Ascending aorta (tissue), 2 donors: ENCODE measurements at regions of chr19 and their contacts with region 1.

Region 1: DNA sequence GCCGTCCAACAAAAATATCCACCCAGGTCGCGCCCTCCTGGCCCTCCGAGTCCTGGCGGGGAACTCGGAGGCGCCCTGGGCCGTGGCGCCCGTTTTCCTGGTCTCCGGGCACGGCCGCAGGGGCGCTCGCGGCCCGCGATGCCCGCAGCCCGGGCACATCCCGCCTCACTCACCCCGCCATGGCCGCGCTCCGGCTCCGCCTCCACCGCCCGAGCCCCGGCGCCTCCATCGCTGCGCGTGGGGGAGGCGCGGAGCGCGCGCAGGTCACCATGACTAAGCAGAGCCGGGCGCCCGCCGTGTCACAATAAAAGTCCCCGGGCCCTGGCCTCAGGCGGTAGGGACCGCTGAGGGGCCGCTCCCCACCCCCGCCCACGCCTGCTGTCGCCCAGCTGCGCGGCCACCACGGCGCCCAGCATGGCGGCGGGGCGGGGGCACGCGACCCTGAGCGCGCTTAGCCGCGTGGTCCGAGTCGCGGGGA is 593 bp downstream of the KEAP1 start:
- DNase-seq: peak; percentile 73 to 97
- H3K4me3 ChIP-seq: peak overlapping the region; percentile 82 to 98
- H3K27ac ChIP-seq: peak overlapping the region; percentile 95 to 96
- H3K4me1 ChIP-seq: peaks cover 3 to 22% of the 10 kb centered on the region in 2 donors
- H3K27me3 ChIP-seq: no peaks in the 10 kb centered on the region
- CTCF ChIP-seq: no peak

Region 2: GRCh38 chr19:10478903-10479384 is 23.6 kb before region 1 on chr19:
- intact Hi-C with region 1: loop called (anchors 1 kb)
- DNase-seq: peak; percentile 85 to 97
- H3K4me3 ChIP-seq: peak overlapping the region; percentile 67 to 73
- H3K27ac ChIP-seq: peak overlapping the region; percentile 31 to 56
- H3K4me1 ChIP-seq: peaks cover 0 to 9% of the 10 kb centered on the region in 2 donors
- H3K27me3 ChIP-seq: no peaks in the 10 kb centered on the region
- CTCF ChIP-seq: peak; percentile 18 to 91 (median 85)

Region 3: DNA sequence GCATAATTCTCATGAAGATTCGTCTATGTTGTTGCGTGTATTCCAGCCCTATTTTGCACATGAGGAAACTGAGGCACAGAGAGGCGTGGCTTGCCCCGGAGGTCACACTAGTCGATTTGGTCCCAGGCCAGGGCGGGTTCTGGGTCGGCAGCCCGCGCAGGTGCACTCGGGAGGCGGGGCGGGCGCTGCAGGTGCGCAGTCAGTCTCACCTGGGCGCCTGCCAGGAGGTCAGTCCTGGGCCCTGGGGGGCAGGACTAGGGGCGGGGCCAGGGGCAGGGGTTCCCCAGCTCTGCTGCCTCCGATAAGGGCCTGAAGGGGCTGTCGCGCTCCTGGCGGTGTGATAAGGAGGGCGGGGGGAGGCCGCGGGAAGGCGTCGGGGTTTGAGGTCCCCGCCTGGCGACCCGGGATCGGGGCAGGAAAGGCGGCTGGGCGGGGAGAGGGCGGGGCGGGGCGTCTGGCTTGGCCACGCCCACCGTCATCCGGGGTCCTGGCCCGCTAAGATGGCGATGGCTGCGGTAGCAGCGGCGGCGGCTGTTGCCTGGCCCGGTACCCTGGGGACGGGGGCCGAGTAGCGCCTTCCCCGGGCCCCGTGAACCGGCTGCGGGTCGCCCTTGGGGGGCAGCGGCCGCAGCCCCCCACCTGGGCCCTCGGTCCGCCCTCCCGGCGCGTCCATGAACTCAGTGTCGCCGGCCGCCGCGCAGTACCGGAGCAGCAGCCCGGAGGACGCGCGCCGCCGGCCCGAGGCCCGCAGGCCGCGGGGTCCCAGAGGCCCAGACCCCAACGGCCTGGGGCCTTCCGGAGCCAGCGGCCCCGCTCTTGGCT is 41.1 kb after region 1 on chr19 and contains the start of gene ATG4D:
- intact Hi-C with region 1: loop called (anchors 2 kb)
- DNase-seq: peak in 1 of 2 donors; percentile 88
- H3K4me3 ChIP-seq: peak within 1 kb of the TSS; percentile 98 to 100
- H3K27ac ChIP-seq: peak within 1 kb of the TSS; percentile 89 to 90
- H3K4me1 ChIP-seq: peaks cover 10 to 14% of the 10 kb centered on the region in 2 donors
- H3K27me3 ChIP-seq: no peaks in the 10 kb centered on the region
- CTCF ChIP-seq: no peak
- total RNA-seq, gene ATG4D: 11.0 TPM

Region 4: GRCh38 chr19:10553943-10554381 is 51.4 kb after region 1 on chr19:
- intact Hi-C with region 1: no loop called
- DNase-seq: no peak
- H3K4me3 ChIP-seq: no peak overlapping the region
- H3K27ac ChIP-seq: no peak overlapping the region
- H3K4me1 ChIP-seq: no peaks in the 10 kb centered on the region
- H3K27me3 ChIP-seq: no peaks in the 10 kb centered on the region
- CTCF ChIP-seq: no peak

Region 5: DNA sequence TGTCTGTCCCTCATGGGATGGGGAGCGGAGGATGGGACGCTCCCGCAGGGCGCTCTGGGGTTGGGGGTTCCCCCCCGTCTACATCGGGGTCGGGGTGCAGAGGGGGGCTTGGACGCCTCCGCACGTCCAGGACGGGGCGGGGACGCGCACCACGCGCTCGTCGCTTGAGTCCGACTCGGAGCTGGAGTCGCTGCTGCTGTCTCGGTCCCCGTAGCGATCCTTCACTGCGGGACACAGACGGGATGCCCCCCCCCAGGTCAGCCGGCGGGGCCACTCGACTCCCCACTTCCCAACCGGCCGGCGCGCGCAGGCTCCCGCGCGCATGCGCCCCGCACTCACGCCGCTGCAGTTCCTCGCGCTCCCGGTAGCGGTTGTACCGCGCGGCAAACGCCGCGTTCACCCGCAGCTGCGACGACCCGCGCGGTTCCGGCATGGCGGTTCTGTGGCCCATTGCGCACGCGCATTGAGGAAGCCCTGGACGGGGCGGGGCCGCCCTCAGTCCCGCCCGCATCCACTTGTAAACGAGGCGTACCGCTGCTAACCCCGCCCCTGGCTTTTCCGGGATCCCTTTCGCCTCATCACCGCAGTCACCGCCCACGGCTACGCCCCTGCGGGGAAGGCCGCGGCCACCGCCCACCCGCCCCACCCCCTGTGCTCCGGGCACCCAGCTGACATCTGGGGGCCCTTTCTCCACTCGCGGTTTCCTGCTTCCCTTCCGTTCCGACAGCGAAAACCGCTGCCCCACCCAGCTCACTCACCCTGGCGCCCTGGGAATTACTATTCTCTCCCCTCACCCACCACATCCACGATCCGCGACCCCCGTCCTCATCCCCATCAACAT is 63.2 kb after region 1 on chr19 and contains the start of gene KRI1:
- intact Hi-C with region 1: loop called (anchors 1 kb)
- DNase-seq: peak; percentile 94 to 99
- H3K4me3 ChIP-seq: peak within 1 kb of the TSS; percentile 61 to 98
- H3K27ac ChIP-seq: peak within 1 kb of the TSS; percentile 78 to 93
- H3K4me1 ChIP-seq: peaks cover 12 to 26% of the 10 kb centered on the region in 2 donors
- H3K27me3 ChIP-seq: no peaks in the 10 kb centered on the region
- CTCF ChIP-seq: peak in 2 of 3 experiments; percentile 17 to 68
- total RNA-seq, gene KRI1: 21.9 TPM

Region 6: DNA sequence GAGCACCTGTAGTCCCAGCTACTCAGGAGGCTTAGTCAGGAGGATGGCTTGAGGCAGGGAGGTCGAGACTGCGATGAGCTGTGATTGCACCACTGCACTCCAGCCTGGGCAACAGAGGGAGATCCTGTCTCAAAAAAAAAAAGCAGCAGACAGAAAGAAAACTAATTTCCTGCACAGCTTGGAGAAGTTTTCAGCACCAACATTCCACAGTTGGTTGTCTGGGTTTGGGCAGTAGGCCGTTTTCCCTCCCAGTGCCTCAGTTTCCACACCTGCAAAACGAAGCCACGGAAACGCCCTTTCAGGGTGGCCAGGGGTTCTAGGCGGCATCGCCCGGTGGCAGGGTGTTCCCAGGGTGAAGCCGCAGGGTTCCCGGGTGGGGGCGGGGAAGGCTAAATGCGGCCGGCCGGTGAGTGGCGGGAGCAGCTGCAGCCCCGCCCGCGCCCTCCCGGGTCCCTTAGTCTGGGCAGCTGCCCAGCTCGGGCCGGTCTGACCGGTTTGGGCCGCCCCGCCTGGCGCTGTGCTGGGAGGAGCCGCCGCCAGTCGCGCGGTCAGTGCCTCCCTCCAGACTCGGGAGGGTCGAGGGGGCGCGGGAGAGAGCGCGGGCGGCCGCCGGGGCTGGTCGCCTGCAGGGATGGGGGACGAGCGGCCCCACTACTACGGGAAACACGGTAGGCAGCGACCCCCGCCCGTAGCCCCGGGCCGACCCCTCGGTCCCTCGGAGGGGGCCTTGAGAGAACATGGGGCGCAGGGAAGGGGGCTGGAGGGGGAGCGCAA is 122.6 kb after region 1 on chr19 and contains the start of gene SLC44A2:
- intact Hi-C with region 1: loop called (anchors 5 kb)
- DNase-seq: peak in 1 of 2 donors; percentile 83
- H3K4me3 ChIP-seq: peak within 1 kb of the TSS; percentile 67
- H3K27ac ChIP-seq: peak within 1 kb of the TSS; percentile 79 to 85
- H3K4me1 ChIP-seq: peaks cover 7 to 15% of the 10 kb centered on the region in 2 donors
- H3K27me3 ChIP-seq: no peaks in the 10 kb centered on the region
- CTCF ChIP-seq: no peak
- total RNA-seq, gene SLC44A2: 354 TPM

Region 7: DNA sequence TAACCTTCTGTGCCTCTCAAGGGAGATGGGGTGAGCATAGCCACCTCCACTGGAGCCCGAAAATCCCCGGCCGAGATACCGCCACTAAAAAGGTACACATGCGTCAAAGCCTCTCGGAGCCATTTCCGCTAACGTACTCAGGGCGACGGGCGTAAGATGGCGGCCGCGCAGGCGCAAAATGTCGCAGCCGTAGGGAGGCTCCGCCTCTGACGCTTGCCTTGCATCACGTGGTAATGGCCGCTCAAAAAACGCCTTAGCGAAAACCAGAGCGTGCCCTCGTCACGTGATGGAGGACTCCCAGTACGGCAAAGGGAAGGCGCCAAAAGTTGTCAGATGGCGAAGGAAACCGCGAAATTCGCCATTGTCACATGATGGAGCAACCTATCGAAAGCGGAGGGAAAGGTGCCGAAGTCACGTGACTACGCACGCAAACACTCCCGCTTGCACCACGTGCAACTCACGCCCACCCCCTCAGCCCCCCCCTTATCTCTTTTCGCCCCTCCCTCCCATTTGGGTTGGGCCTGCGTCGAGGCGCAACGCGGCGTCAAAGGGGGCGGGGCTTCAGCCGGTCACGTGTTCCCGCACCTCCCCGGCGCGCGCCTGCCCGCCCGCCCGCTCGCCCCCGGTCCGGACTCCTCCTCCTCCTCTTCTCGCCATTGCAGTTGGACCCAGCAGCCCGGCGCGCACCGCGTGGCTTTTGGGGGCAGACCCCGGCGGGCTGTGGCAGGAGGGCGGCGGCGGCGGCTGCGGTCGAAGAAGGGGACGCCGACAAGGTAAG is 151.3 kb after region 1 on chr19 and contains the start of gene ILF3:
- intact Hi-C with region 1: loop called (anchors 5 kb)
- DNase-seq: peak; percentile 99 to 100
- H3K4me3 ChIP-seq: peak within 1 kb of the TSS; percentile 94 to 97
- H3K27ac ChIP-seq: peak within 1 kb of the TSS; percentile 97 to 100
- H3K4me1 ChIP-seq: peaks cover 0 to 23% of the 10 kb centered on the region in 2 donors
- H3K27me3 ChIP-seq: no peaks in the 10 kb centered on the region
- CTCF ChIP-seq: no peak
- total RNA-seq, gene ILF3: 168 TPM